Caco-2 (cell line): ENCODE measurements at regions of chr16 and their contacts with region 1.

Region 1: DNA sequence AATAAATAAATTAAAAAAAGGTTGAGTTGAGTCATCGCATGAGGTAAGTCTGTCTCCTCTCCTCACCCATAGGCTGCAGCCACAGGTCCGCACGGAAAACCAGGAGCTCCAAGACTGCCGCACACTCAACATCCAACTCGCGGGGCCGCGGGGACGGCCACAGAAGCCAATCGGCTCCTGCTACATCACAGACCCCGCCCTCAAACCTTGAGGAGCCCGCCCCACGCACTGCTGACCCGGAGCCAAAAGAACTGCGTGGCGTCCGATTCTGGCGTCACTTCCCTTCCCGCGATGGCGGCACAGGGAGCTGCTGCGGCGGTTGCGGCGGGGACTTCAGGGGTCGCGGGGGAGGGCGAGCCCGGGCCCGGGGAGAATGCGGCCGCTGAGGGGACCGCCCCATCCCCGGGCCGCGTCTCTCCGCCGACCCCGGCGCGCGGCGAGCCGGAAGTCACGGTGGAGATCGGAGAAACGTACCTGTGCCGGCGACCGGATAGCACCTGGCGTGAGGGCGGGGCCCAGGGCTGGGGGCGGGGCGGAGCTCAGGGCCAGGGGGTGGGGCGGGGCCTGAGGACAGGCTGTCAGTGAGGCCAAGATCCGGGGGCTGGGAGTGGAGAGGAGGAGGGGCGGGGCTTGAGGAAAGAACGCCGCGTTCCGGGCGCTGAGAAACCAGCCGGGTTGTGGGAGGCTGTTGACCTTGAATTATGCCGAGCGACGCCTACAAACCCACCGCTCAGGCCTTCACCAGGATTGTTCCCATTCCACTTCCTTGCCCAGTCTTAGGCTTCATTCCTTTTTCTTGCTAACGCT is at the start of gene KAT8:
- DNase-seq: peak; percentile 97
- H3K4me3 ChIP-seq: peak within 1 kb of the TSS; percentile 55
- H3K4me3 Mint-ChIP-seq: peak within 1 kb of the TSS; percentile 88
- H3K27ac Mint-ChIP-seq: peak within 1 kb of the TSS; percentile 88
- H3K4me1 ChIP-seq: peaks cover 16% of the 10 kb centered on the region
- H3K4me1 Mint-ChIP-seq: peaks cover 16% of the 10 kb centered on the region
- H3K27me3 ChIP-seq: no peaks in the 10 kb centered on the region
- H3K27me3 Mint-ChIP-seq: no peaks in the 10 kb centered on the region
- CTCF ChIP-seq: no peak
- total RNA-seq, gene KAT8: 46.2 and 50.2 TPM in 2 replicates

Region 2: DNA sequence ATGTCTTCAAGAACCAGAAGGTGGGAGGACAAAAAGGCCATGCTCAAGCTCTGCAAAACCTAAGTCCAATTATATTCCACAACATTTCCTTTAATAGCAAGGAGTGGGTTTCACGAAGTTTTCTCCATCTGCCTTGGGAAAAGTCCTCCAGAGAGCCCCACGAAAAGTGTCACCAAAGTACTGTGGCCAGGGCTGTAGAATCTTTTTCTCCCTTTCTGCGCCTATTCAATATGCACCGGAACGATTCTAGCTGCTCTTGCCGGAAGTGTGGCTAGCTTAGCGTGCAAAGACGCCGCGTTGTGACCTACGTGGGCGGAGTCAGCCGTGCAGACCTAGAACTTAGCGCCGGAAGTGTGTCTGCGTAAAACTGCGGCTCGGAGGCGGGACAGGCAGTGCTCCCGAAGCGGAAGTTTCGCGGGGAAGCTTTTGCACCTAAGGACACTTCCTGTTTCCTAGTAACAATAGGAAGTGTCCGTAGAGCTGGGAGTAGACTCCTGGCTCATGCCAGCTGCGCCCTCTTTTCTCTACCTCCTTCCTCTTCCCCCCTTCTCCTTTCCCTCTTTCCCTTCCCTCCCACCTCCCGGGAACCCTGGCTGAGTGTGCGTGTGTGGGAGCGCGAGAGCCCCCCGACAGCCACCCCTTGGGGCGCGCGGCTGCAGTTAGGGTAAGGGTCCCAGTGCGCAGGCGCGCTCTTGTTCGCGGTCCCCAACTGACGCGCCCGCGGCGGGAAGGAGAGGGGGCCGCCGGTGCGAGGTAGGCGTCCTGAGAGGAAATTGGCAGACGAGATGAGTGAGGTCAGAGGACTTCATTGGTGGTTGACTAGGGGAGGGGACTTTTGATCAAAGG is 43.4 kb before region 1 on chr16 and contains the starts of genes ZNF646 and ZNF668:
- CTCF ChIA-PET with region 1: interaction called, 3 read pairs
- POLR2A ChIA-PET with region 1: interaction called, 34 read pairs
- intact Hi-C with region 1: no loop called
- DNase-seq: peak; percentile 94 to 98
- H3K4me3 ChIP-seq: peak within 1 kb of the TSS; percentile 79
- H3K4me3 Mint-ChIP-seq: peak within 1 kb of the TSS; percentile 84
- H3K27ac Mint-ChIP-seq: peak within 1 kb of the TSS; percentile 58
- H3K4me1 ChIP-seq: peaks cover 9% of the 10 kb centered on the region; the same call in 1 of the 2 replicates
- H3K4me1 Mint-ChIP-seq: peaks cover 7% of the 10 kb centered on the region
- H3K27me3 ChIP-seq: no peaks in the 10 kb centered on the region
- H3K27me3 Mint-ChIP-seq: no peaks in the 10 kb centered on the region
- CTCF ChIP-seq: no peak
- total RNA-seq, gene ZNF646: 17.2 and 18.1 TPM in 2 replicates
- total RNA-seq, gene ZNF668: 8.7 and 10.8 TPM in 2 replicates

Region 3: GRCh38 chr16:31128711-31129567 is 11.3 kb after region 1 on chr16:
- CTCF ChIA-PET with region 1: interaction called, 8 read pairs
- POLR2A ChIA-PET with region 1: interaction called, 35 read pairs
- intact Hi-C with region 1: loop called (anchors 1 kb)
- DNase-seq: no peak
- H3K4me3 ChIP-seq: no peak overlapping the region
- H3K4me3 Mint-ChIP-seq: no peak overlapping the region
- H3K27ac Mint-ChIP-seq: peak overlapping the region; percentile 75
- H3K4me1 ChIP-seq: peaks cover 37% of the 10 kb centered on the region
- H3K4me1 Mint-ChIP-seq: peaks cover 32% of the 10 kb centered on the region
- H3K27me3 ChIP-seq: no peaks in the 10 kb centered on the region
- H3K27me3 Mint-ChIP-seq: no peaks in the 10 kb centered on the region
- CTCF ChIP-seq: no peak

Region 4: DNA sequence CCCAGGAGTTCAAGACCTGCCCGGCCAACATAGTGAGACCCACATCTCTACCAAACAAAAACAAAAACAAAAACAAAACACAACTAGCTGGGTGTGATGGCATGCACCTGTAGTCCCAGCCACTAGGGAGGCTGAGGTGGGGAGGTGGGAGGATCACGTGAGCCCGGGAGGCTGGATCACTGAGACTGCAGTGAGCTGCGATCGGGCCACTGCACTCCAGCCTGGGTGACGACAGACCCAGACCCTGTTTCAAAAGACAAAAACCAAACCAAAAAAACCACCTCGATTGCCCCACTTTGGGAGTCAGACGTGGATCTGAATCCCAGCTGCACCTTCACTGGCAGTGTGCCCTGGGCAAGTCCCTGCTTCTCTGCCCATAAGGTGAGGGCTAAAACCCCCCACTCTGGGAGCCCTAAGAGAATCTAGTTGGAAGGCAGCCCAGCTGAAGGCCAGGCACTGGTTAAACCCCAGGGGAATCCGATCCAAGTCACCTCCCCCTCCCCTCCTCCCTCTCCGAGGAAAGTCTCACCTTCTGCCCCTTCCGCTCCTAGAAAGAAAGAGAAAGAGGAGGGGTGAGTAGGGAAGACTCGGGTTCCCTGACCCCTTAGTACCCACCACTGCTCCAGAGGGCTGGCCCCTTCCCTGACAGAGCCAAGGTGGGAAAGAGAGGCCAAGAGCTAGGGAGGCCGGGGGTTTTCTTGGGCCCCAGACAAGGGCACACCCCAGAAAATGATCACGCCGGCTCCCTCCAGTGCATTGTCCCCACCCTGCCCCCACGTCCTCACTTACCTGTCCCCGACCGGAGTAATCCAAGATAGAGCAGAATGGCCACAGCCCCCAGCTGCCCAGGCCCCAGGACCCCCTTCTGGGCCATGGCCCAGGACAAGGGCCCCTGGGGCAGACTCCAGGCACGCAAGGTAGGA is 17.3 kb after region 1 on chr16:
- CTCF ChIA-PET with region 1: interaction called, 12 read pairs
- POLR2A ChIA-PET with region 1: interaction called, 52 read pairs
- intact Hi-C with region 1: loop called (anchors 1 kb)
- DNase-seq: peak; percentile 67 to 72
- H3K4me3 ChIP-seq: peak overlapping the region; percentile 78
- H3K4me3 Mint-ChIP-seq: peak overlapping the region; percentile 76
- H3K27ac Mint-ChIP-seq: peak overlapping the region; percentile 75
- H3K4me1 ChIP-seq: peaks cover 84% of the 10 kb centered on the region
- H3K4me1 Mint-ChIP-seq: peaks cover 51% of the 10 kb centered on the region
- H3K27me3 ChIP-seq: no peaks in the 10 kb centered on the region
- H3K27me3 Mint-ChIP-seq: no peaks in the 10 kb centered on the region
- CTCF ChIP-seq: no peak

Region 5: DNA sequence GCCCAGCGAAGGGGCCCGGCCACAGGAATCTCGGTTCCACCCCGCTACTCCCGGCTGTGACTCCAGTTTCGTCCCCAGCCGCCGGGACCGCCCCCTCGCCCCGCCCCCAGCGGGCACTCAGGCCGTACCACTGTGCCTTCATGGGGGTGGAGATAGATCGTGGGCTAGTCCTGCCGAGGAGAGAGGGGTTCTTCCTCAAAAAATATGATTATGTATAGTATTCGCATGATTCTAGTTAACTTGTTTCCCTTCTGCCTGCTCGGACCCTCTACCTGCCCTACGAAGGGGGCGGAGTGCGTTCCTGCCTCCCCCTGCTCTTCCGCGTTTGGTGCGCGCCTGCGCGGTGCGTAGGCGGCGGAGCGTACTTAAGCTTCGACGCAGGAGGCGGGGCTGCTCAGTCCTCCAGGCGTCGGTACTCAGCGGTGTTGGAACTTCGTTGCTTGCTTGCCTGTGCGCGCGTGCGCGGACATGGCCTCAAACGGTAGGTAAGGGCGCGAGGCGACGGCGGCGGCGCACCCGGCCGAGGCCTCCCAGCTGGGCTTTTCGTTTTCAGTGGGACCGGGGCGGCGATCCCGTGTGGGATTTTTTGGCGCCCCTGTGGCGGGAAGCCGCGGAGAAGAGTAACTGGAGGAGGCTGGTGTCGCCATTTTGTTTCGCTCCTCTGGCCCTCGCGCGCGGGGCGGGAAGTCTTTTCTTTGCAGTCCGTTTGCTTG is 62.3 kb after region 1 on chr16 and contains the start of gene FUS:
- CTCF ChIA-PET with region 1: no interaction called
- POLR2A ChIA-PET with region 1: interaction called, 37 read pairs
- intact Hi-C with region 1: no loop called
- DNase-seq: peak; percentile 88 to 90
- H3K4me3 ChIP-seq: peak within 1 kb of the TSS; percentile 95
- H3K4me3 Mint-ChIP-seq: peak within 1 kb of the TSS; percentile 97
- H3K27ac Mint-ChIP-seq: peak within 1 kb of the TSS; percentile 100
- H3K4me1 ChIP-seq: no peaks in the 10 kb centered on the region
- H3K4me1 Mint-ChIP-seq: peaks cover 4% of the 10 kb centered on the region
- H3K27me3 ChIP-seq: no peaks in the 10 kb centered on the region
- H3K27me3 Mint-ChIP-seq: no peaks in the 10 kb centered on the region
- CTCF ChIP-seq: no peak
- total RNA-seq, gene FUS: 489 and 490 TPM in 2 replicates

Region 6: GRCh38 chr16:31395647-31396046 is 278.1 kb after region 1 on chr16:
- CTCF ChIA-PET with region 1: no interaction called
- POLR2A ChIA-PET with region 1: no interaction called
- intact Hi-C with region 1: no loop called
- DNase-seq: no peak
- H3K4me3 ChIP-seq: no peak overlapping the region
- H3K4me3 Mint-ChIP-seq: no peak overlapping the region
- H3K27ac Mint-ChIP-seq: no peak overlapping the region
- H3K4me1 ChIP-seq: no peaks in the 10 kb centered on the region
- H3K4me1 Mint-ChIP-seq: no peaks in the 10 kb centered on the region
- H3K27me3 ChIP-seq: no peaks in the 10 kb centered on the region
- H3K27me3 Mint-ChIP-seq: peaks cover 5% of the 10 kb centered on the region
- CTCF ChIP-seq: no peak